ENCODE measurements at regions of chr11 and their contacts with region 1.

Region 1: GRCh38 chr11:134275534-134276395 is at the start of gene GLB1L3:
- DNase-seq: peak; percentile 82
- H3K4me3 Mint-ChIP-seq: peak within 1 kb of the TSS; percentile 87
- H3K27ac Mint-ChIP-seq: peak within 1 kb of the TSS; percentile 96
- H3K4me1 Mint-ChIP-seq: peaks cover 56% of the 10 kb centered on the region
- H3K27me3 Mint-ChIP-seq: peaks cover 2% of the 10 kb centered on the region
- total RNA-seq, gene GLB1L3: 14.5 and 15.4 TPM in 2 replicates

Region 2: GRCh38 chr11:133843454-133843987 is 432.2 kb before region 1 on chr11:
- intact Hi-C with region 1: no loop called
- DNase-seq: no peak
- H3K4me3 Mint-ChIP-seq: no peak overlapping the region
- H3K27ac Mint-ChIP-seq: no peak overlapping the region
- H3K4me1 Mint-ChIP-seq: no peaks in the 10 kb centered on the region
- H3K27me3 Mint-ChIP-seq: peaks cover 7% of the 10 kb centered on the region

Region 3: GRCh38 chr11:134244655-134245054 is 31.1 kb before region 1 on chr11:
- intact Hi-C with region 1: no loop called
- DNase-seq: no peak
- H3K4me3 Mint-ChIP-seq: no peak overlapping the region
- H3K27ac Mint-ChIP-seq: no peak overlapping the region
- H3K4me1 Mint-ChIP-seq: peaks cover 12% of the 10 kb centered on the region
- H3K27me3 Mint-ChIP-seq: no peaks in the 10 kb centered on the region

Region 4: DNA sequence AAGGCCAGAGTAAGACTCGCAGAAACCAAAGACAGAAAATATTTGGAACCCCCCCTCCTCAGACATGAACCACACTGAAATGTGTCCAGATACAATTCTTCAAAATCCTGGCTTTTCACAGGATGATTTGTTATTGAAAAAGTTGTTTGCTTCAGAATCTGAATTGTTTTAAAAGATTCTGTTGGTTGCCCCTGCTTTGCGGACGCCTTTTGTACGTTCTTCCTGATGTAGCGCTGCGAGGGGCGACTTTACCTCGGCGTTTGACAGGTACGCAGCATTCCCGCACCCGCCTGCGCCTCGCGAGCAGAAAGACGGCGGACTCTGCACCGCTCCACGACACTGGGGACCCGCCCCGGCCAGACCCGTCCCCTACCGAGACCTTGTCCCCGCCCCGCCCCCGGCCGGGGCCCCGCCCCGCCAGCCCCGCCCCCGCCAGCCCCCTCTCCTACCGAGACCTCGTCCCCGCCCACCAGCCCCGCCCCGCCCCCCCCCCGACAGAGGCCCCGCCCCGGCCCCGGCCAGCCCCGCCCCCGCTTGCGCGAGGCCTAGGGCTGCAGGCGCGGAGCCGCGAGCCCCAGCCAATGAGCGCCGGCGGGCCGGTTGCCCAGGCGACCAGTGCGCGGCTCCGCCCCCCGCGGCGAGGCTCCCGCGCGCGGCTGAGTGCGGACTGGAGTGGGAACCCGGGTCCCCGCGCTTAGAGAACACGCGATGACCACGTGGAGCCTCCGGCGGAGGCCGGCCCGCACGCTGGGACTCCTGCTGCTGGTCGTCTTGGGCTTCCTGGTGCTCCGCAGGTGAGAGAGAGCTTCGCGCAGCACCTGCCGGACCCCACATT is 55.8 kb after region 1 on chr11 and contains the start of gene GLB1L2:
- intact Hi-C with region 1: loop called (anchors 1 kb)
- DNase-seq: peak; percentile 78
- H3K4me3 Mint-ChIP-seq: peak within 1 kb of the TSS; percentile 77
- H3K27ac Mint-ChIP-seq: no peak within 1 kb of the TSS
- H3K4me1 Mint-ChIP-seq: peaks cover 9% of the 10 kb centered on the region
- H3K27me3 Mint-ChIP-seq: peaks cover 50% of the 10 kb centered on the region
- total RNA-seq, gene GLB1L2: 3.1 and 4.3 TPM in 2 replicates

Measured in activated T-helper 2 cell treated with anti-CD3 and anti-CD28 coated beads, Interferon-gamma antibody, Interleukin-2, Interleukin-4, amounts not matched to agents 10 μg/mL and 5 μg/mL and 100 μg/mL, durations not matched to agents 14 hours and 24 hours and 36 hours (primary cell).